CD8-positive, alpha-beta T cell (primary cell): ENCODE measurements at regions of chr22 and their contacts with region 1.

Region 1: GRCh38 chr22:46296257-46297150 is at the start of gene GTSE1:
- DNase-seq: peak; percentile 94 to 100 (median 97)
- ATAC-seq: peak; percentile 97
- H3K4me3 ChIP-seq: peak within 1 kb of the TSS; percentile 61 to 63
- H3K4me3 Mint-ChIP-seq: peak within 1 kb of the TSS; percentile 89
- H3K27ac ChIP-seq: peak within 1 kb of the TSS; percentile 74 to 94
- H3K27ac Mint-ChIP-seq: peak within 1 kb of the TSS; percentile 98
- H3K4me1 ChIP-seq: peaks cover 24% of the 10 kb centered on the region
- H3K4me1 Mint-ChIP-seq: peaks cover 21% of the 10 kb centered on the region
- H3K27me3 ChIP-seq: no peaks in the 10 kb centered on the region
- H3K27me3 Mint-ChIP-seq: peaks cover 14% of the 10 kb centered on the region
- CTCF ChIP-seq: peak; percentile 29
- total RNA-seq, gene GTSE1: 0.19 to 0.30 TPM

Region 2: GRCh38 chr22:46013460-46014416 is 282.8 kb before region 1 on chr22:
- CTCF ChIA-PET with region 1: no interaction called
- POLR2A ChIA-PET with region 1: interaction called, 7 read pairs
- intact Hi-C with region 1: loop called in 1 of 2 experiments (anchors 5 kb)
- DNase-seq: peak; percentile 58 to 90 (median 86)
- ATAC-seq: peak; percentile 90
- H3K4me3 ChIP-seq: peak overlapping the region; percentile 79 to 86
- H3K4me3 Mint-ChIP-seq: peak overlapping the region; percentile 89
- H3K27ac ChIP-seq: peak overlapping the region; percentile 86 to 89
- H3K27ac Mint-ChIP-seq: peak overlapping the region; percentile 90
- H3K4me1 ChIP-seq: peaks cover 5% of the 10 kb centered on the region
- H3K4me1 Mint-ChIP-seq: peaks cover 5% of the 10 kb centered on the region
- H3K27me3 ChIP-seq: no peaks in the 10 kb centered on the region
- H3K27me3 Mint-ChIP-seq: no peaks in the 10 kb centered on the region
- CTCF ChIP-seq: peak; percentile 62

Region 3: GRCh38 chr22:46122511-46122971 is 174.0 kb before region 1 on chr22:
- CTCF ChIA-PET with region 1: interaction called, 25 read pairs
- POLR2A ChIA-PET with region 1: interaction called, 3 read pairs
- intact Hi-C with region 1: loop called in 1 of 2 experiments (anchors 1 kb)
- DNase-seq: peak; percentile 39 to 77 (median 66)
- ATAC-seq: peak; percentile 79
- H3K4me3 ChIP-seq: no peak overlapping the region
- H3K4me3 Mint-ChIP-seq: no peak overlapping the region
- H3K27ac ChIP-seq: no peak overlapping the region
- H3K27ac Mint-ChIP-seq: no peak overlapping the region
- H3K4me1 ChIP-seq: no peaks in the 10 kb centered on the region
- H3K4me1 Mint-ChIP-seq: no peaks in the 10 kb centered on the region
- H3K27me3 ChIP-seq: no peaks in the 10 kb centered on the region
- H3K27me3 Mint-ChIP-seq: no peaks in the 10 kb centered on the region
- CTCF ChIP-seq: peak; percentile 91

Region 4: GRCh38 chr22:46250035-46250782 is 46.3 kb before region 1 on chr22 and contains the start of gene CDPF1:
- CTCF ChIA-PET with region 1: no interaction called
- POLR2A ChIA-PET with region 1: interaction called, 12 read pairs
- intact Hi-C with region 1: loop called (anchors 1 kb)
- DNase-seq: peak; percentile 74 to 96 (median 91)
- ATAC-seq: peak; percentile 92
- H3K4me3 ChIP-seq: peak within 1 kb of the TSS; percentile 75 to 80
- H3K4me3 Mint-ChIP-seq: peak within 1 kb of the TSS; percentile 82
- H3K27ac ChIP-seq: peak within 1 kb of the TSS; percentile 66 to 70
- H3K27ac Mint-ChIP-seq: peak within 1 kb of the TSS; percentile 82
- H3K4me1 ChIP-seq: peaks cover 21% of the 10 kb centered on the region
- H3K4me1 Mint-ChIP-seq: peaks cover 22% of the 10 kb centered on the region
- H3K27me3 ChIP-seq: no peaks in the 10 kb centered on the region
- H3K27me3 Mint-ChIP-seq: no peaks in the 10 kb centered on the region
- CTCF ChIP-seq: no peak
- total RNA-seq, gene CDPF1: 0.81 to 1.0 TPM

Region 5: DNA sequence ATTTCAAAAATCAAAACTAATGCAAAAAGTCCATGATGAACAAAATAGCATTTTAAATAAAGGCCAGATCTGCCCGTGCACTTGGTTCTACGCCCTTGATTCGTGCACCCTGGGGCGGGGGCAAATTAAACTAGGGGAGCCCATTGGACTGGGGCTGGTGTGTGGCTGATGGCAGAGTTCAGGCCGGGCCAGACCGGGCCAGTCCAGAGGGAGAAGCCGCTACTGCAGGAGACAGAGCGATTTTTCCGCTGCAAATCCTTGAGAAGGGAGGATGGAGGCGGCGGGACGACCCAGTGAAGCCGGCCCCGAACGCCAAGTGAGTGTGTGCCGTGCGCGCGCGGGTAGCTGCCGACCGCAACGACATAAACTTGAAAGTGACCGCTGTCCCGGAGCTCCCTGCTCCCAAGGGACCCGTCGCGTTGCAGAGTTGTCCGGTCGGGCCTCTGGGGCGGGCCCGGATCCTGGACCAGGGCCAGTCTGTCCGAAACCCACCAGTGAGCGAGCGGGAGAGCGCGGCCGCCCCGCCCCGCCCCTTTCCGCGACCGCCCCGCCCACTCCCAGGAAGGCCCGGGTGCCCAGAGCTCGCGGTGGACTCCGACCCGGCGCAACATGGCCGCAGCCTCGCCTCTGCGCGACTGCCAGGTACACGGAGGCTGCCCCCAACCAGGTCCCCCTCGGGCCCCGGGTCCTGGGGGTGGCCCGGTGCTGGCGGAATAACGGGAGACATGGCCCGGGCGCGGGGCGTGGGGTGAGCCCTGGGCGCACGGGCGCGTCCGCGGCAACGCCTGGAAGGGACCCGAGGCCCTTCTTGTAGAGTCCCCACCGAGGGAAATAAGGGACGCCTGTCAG is 28.8 kb before region 1 on chr22 and contains the start of gene TTC38:
- CTCF ChIA-PET with region 1: no interaction called
- POLR2A ChIA-PET with region 1: interaction called, 6 read pairs
- intact Hi-C with region 1: loop called (anchors 1 to 2 kb)
- DNase-seq: peak in 7 of 9 experiments; percentile 13 to 73 (median 52)
- ATAC-seq: peak; percentile 88
- H3K4me3 ChIP-seq: peak within 1 kb of the TSS; percentile 80 to 83
- H3K4me3 Mint-ChIP-seq: peak within 1 kb of the TSS; percentile 88
- H3K27ac ChIP-seq: peak within 1 kb of the TSS in 1 of 2 experiments; percentile 31
- H3K27ac Mint-ChIP-seq: peak within 1 kb of the TSS; percentile 37
- H3K4me1 ChIP-seq: peaks cover 3% of the 10 kb centered on the region
- H3K4me1 Mint-ChIP-seq: peaks cover 17% of the 10 kb centered on the region
- H3K27me3 ChIP-seq: no peaks in the 10 kb centered on the region
- H3K27me3 Mint-ChIP-seq: peaks cover 14% of the 10 kb centered on the region
- CTCF ChIP-seq: no peak
- total RNA-seq, gene TTC38: 5.9 to 7.9 TPM

Region 6: DNA sequence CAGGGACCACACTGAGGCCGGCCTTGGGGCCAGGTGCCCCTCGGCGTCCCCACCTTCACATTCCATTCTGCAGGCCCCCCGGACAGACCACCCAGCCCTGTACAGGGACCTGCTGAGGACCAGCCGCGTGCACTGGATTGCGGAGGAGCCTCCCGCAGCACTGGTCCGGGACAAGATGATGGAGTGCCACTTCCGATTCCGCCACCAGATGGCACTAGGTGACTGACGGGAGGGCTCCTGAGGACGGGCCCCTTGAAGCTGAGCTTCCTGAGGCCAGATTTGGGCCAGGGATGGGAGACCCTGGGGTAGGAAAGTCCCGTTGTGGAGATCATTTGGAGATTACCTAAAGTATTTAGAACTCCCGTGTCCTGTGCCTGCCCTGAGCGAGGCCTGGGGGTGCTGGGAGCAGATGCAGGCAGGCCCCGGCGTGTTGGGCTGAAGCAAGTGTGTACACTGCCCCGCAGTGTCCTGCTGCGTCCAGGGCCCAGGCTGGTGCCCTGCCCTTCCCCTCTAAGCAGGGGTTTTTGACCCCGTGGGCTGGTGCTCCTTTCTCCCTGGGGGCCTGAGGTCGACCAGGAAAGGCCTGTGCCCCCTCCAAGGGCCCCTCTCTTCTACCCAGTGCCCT is 59.0 kb after region 1 on chr22:
- CTCF ChIA-PET with region 1: no interaction called
- POLR2A ChIA-PET with region 1: no interaction called
- intact Hi-C with region 1: no loop called
- DNase-seq: peak; percentile 43 to 76 (median 68)
- ATAC-seq: peak; percentile 61
- H3K4me3 ChIP-seq: no peak overlapping the region
- H3K4me3 Mint-ChIP-seq: no peak overlapping the region
- H3K27ac ChIP-seq: no peak overlapping the region
- H3K27ac Mint-ChIP-seq: no peak overlapping the region
- H3K4me1 ChIP-seq: no peaks in the 10 kb centered on the region
- H3K4me1 Mint-ChIP-seq: no peaks in the 10 kb centered on the region
- H3K27me3 ChIP-seq: no peaks in the 10 kb centered on the region
- H3K27me3 Mint-ChIP-seq: no peaks in the 10 kb centered on the region
- CTCF ChIP-seq: peak; percentile 72

Region 7: GRCh38 chr22:46684706-46685105 is 388.2 kb after region 1 on chr22:
- CTCF ChIA-PET with region 1: no interaction called
- POLR2A ChIA-PET with region 1: no interaction called
- intact Hi-C with region 1: no loop called
- DNase-seq: peak in 1 of 9 experiments; percentile 35
- ATAC-seq: peak; percentile 24
- H3K4me3 ChIP-seq: no peak overlapping the region
- H3K4me3 Mint-ChIP-seq: no peak overlapping the region
- H3K27ac ChIP-seq: no peak overlapping the region
- H3K27ac Mint-ChIP-seq: peak overlapping the region; percentile 86
- H3K4me1 ChIP-seq: peaks cover 13% of the 10 kb centered on the region
- H3K4me1 Mint-ChIP-seq: peaks cover 21% of the 10 kb centered on the region
- H3K27me3 ChIP-seq: no peaks in the 10 kb centered on the region
- H3K27me3 Mint-ChIP-seq: no peaks in the 10 kb centered on the region
- CTCF ChIP-seq: no peak